ENCODE measurements at regions of chr1 and their contacts with region 1.

Region 1: GRCh38 chr1:78145105-78145580 is 99.4 kb downstream of the GIPC2 start:
- DNase-seq: peak; percentile 56
- ATAC-seq: peak; percentile 89
- H3K4me3 ChIP-seq: no peak overlapping the region
- H3K27ac ChIP-seq: no peak overlapping the region
- H3K4me1 ChIP-seq: no peaks in the 10 kb centered on the region
- H3K27me3 ChIP-seq: no peaks in the 10 kb centered on the region
- CTCF ChIP-seq: peak; percentile 83 to 88 (median 85)
- POLR2A ChIP-seq: no peak
- RAD21 ChIP-seq: peak; percentile 89

Region 2: GRCh38 chr1:78092686-78093085 is 52.5 kb before region 1 on chr1:
- CTCF ChIA-PET with region 1: no interaction called
- POLR2A ChIA-PET with region 1: no interaction called
- RAD21 ChIA-PET with region 1: no interaction called
- intact Hi-C with region 1: no loop called
- DNase-seq: peak; percentile 40
- ATAC-seq: peak; percentile 95
- H3K4me3 ChIP-seq: no peak overlapping the region
- H3K27ac ChIP-seq: no peak overlapping the region
- H3K4me1 ChIP-seq: peaks cover 11 to 25% of the 10 kb centered on the region in 2 experiments
- H3K27me3 ChIP-seq: no peaks in the 10 kb centered on the region
- CTCF ChIP-seq: no peak
- POLR2A ChIP-seq: no peak
- RAD21 ChIP-seq: 0 out of 2 replicates have a peak, but pooled peaks have one; percentile 20

Region 3: DNA sequence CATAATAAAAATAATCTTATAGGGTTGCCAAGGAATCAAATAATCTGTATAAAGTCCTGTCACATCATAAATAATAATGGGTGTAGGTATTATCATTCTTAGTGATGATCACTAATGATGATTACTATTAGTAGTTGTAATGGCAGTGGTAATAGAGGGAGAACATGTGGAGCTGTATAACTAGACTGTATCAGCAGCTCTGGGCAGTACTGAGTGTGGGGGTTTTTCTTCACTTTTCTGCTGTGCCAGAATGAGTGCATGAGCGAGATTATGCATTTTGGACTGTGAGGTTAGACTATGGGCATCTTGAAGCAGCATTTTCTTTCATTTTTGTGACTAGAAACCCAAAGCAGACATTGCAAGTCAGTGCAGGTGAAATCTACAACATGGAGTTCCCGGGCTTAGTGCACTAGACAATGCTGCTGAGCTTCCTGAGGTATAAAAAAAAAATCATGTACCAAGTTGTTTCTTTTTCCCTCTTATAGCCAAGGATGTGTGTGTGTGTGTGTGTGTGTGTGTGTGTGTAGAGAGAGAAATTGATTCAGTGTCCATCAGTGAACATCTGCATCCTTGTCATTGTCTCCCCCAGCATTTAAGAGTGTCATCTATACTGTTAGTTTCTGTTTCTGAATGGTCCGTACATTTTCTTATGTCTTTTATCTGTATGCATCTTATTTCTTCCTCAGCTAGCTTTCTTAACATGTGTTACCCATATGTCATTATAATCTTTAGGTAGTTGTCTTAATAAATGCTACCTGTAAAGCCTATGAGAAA is 12.8 kb before region 1 on chr1:
- CTCF ChIA-PET with region 1: interaction called, 11 read pairs
- POLR2A ChIA-PET with region 1: no interaction called
- RAD21 ChIA-PET with region 1: no interaction called
- intact Hi-C with region 1: no loop called
- DNase-seq: no peak
- ATAC-seq: no peak
- H3K4me3 ChIP-seq: no peak overlapping the region
- H3K27ac ChIP-seq: no peak overlapping the region
- H3K4me1 ChIP-seq: no peaks in the 10 kb centered on the region
- H3K27me3 ChIP-seq: no peaks in the 10 kb centered on the region
- CTCF ChIP-seq: no peak
- POLR2A ChIP-seq: no peak
- RAD21 ChIP-seq: no peak

Region 4: GRCh38 chr1:78333502-78333901 is 188.4 kb after region 1 on chr1:
- CTCF ChIA-PET with region 1: no interaction called
- POLR2A ChIA-PET with region 1: no interaction called
- RAD21 ChIA-PET with region 1: no interaction called
- intact Hi-C with region 1: loop called (anchors 5 kb)
- DNase-seq: peak; percentile 37
- ATAC-seq: peak; percentile 86
- H3K4me3 ChIP-seq: no peak overlapping the region
- H3K27ac ChIP-seq: no peak overlapping the region
- H3K4me1 ChIP-seq: peaks cover 0 to 4% of the 10 kb centered on the region in 2 experiments; a peak in 1 of 4 replicates
- H3K27me3 ChIP-seq: no peaks in the 10 kb centered on the region
- CTCF ChIP-seq: peak; percentile 36 to 90 (median 87); a peak in 5 of 6 replicates
- POLR2A ChIP-seq: no peak
- RAD21 ChIP-seq: peak; percentile 42

Region 5: GRCh38 chr1:78676347-78676982 is 531.3 kb after region 1 on chr1:
- CTCF ChIA-PET with region 1: no interaction called
- POLR2A ChIA-PET with region 1: no interaction called
- RAD21 ChIA-PET with region 1: no interaction called
- intact Hi-C with region 1: loop called (anchors 5 kb)
- DNase-seq: peak; percentile 40
- ATAC-seq: peak; percentile 63
- H3K4me3 ChIP-seq: no peak overlapping the region
- H3K27ac ChIP-seq: no peak overlapping the region
- H3K4me1 ChIP-seq: no peaks in the 10 kb centered on the region
- H3K27me3 ChIP-seq: no peaks in the 10 kb centered on the region
- CTCF ChIP-seq: peak; percentile 62 to 83 (median 72); a peak in 5 of 6 replicates
- POLR2A ChIP-seq: no peak
- RAD21 ChIP-seq: peak; percentile 75